ENCODE measurements at regions of chr11 and their contacts with region 1.

Region 1: GRCh38 chr11:69670158-69670845 is 4.9 kb downstream of the LTO1 start:
- DNase-seq: peak; percentile 90 to 97

Region 2: DNA sequence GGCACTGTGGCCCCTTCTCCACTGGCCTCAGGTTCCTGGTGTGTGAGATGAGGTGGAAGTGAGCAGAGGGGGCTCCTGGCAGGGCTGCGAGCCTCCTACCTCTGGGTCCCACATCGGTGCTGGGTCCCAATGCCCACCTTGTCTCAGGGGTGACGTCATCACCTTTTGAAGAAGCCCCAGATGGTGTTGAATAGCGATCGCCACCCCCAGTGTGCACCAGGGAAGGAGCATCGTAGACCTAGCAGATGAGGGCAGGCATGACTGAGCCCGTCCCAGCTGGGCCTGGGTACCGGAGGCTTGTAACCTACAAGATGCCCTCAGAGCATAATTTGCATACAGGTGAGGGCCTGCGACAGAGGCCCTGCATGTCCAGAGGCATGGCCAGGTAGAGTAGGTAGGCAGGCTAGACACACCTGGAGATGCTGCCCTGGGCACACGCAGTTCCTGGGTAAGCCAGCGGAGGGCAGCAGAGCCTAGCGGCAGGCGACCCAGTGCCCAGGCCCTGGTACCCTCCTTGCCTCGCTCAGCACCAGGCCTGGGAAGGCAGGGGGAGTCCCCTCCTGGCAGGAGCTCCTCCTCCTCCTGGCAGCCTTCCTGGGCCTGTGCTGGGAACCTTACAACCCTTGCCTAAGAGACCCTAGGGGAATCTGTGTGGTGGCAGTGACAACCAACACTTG is 569.0 kb before region 1 on chr11:
- in situ Hi-C with region 1: loop called (anchors 25 kb)
- DNase-seq: peak; percentile 86 to 92

Region 3: DNA sequence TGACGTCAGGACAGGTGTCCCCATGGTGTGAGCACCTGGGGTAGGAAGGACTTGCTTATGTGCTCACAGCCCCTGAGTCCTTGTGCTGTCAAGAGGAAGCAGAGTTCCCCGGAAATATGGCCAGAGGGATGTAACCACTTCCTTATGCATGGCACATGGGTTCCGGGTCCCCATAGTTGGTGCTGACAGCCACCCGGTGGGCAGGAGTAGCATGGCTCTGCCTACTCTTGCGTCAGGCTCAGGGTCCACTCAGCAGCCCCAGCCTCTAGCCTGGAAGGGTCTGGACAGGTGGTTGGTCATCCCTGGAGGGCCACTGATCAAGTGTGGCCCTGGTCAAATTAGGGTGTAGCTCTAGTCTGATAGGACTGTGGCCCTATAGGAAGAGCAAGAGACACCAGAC is 72.1 kb before region 1 on chr11:
- in situ Hi-C with region 1: no loop called
- DNase-seq: peak; percentile 41 to 69

Measured in T47D (cell line).